ENCODE measurements at regions of chr5 and their contacts with region 1.

Region 1: DNA sequence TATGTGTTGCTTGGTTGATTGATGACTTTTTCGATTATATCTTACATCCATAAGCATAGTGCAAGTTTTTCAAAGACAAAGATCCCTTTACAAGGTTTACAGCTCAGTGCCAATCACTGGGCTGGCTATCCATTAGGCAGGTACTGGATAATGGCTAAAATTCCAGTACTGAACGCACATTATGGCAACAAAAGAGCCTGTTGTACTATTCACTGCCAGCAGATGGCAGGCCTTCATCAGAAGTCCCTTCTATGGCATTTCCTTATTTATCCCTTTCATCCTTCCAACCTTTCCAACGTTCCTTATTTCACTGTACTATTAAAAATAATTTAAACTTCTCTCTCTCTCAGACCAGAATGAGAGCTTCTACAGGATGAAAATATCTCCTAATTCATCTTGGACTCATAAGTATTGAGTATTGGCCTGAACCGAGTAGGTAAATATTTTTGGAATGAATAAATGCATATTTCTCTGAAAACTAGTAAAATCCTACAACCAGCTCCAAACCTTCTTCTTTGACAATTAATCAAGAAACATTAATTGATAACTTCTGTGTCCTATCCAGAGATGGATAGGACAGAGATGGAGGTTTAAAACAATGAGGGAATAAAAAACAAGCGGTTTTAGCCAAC is 6.7 kb upstream of the WNT8A start:
- H3K4me3 ChIP-seq: no peak overlapping the region
- H3K27ac ChIP-seq: no peak overlapping the region
- H3K4me1 ChIP-seq: no peaks in the 10 kb centered on the region
- CTCF ChIP-seq: peak; percentile 74; the same call in 1 of the 2 replicates

Region 2: DNA sequence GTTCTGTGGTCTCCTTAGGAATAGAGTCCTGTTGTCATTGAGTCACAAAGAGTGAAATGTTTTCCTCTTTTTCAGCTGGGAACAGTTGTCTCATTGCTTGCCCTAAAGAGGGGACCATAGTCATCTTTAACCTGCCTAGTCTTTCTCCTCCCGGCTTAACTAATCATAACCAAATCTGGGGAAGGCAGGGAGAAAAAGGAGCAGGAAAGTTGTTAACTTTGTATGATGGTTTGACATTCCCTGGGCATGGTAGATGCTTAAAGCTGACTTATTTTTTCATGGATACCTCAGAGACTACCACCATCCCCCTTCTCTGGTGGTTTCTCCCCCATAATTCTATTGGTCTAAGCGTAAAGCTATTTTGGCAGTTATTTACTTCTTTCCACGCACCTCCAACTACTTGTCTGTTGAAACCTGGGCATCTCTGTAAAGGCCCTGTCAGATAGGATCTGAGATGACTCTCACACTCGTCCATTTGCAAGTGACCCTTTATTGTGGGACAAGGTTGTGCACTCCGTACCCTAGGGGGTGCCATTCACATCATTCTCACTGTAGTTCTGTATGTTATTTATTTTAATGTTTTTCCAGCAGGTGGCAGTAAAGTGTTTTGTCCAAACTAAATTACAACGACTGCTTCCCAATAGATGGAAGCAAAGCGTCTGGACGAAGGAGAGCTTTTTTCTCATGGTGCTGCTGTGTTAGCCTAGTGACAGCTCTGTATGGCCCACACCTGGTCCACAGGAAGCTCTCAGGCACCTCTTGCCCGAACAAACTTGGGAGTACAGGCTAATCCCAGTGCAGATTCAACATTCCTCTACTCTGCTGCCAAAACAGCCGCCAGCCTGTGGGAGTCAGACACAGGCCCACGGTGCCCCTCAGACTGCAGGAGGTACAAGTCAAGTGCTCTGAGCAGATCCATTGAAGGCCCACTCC is 41.3 kb before region 1 on chr5:
- CTCF ChIA-PET with region 1: interaction called, 34 read pairs
- POLR2A ChIA-PET with region 1: interaction called, 5 read pairs
- H3K4me3 ChIP-seq: no peak overlapping the region
- H3K27ac ChIP-seq: no peak overlapping the region
- H3K4me1 ChIP-seq: no peaks in the 10 kb centered on the region
- CTCF ChIP-seq: peak; percentile 90

Region 3: GRCh38 chr5:138092301-138092700 is 15.1 kb after region 1 on chr5:
- CTCF ChIA-PET with region 1: interaction called, 48 read pairs
- POLR2A ChIA-PET with region 1: no interaction called
- H3K4me3 ChIP-seq: no peak overlapping the region
- H3K27ac ChIP-seq: no peak overlapping the region
- H3K4me1 ChIP-seq: no peaks in the 10 kb centered on the region
- CTCF ChIP-seq: no peak

Region 4: DNA sequence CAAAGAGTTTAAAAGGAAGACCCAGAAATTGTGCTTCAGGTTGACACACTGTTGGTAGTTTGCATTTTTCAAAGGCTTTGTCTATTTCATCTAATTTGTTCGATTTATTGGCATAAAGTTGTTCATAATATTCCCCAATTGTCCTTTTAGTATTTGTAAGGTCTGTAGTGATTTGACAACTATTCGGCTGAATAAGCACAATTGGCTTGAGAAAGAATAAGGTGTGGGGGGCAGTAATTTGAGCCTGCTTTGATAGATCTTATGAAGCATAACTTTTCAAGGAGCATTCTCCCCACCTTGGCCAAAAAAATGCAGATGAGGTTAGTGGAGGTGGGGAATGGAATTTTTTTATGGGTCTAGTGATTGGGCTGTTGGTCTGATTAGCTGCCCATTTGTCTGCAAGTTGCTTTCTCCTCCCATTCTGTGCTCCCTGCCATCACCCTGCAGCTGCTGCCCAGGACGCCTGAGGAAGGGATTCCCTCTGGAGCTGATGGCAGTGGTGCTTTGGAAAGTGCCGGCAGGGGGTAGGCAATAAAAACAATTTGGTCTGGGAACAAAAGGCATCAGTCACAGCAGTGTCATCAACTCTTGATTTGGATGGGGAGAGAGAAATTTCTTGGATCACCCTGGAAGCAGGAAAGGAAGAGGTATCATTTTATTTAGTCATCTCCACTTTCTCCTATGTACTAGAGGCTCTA is 33.2 kb after region 1 on chr5:
- CTCF ChIA-PET with region 1: interaction called, 16 read pairs
- POLR2A ChIA-PET with region 1: no interaction called
- H3K4me3 ChIP-seq: no peak overlapping the region
- H3K27ac ChIP-seq: peak overlapping the region; percentile 13; the same call in 1 of the 2 replicates
- H3K4me1 ChIP-seq: peaks cover 22% of the 10 kb centered on the region
- CTCF ChIP-seq: no peak

Region 5: DNA sequence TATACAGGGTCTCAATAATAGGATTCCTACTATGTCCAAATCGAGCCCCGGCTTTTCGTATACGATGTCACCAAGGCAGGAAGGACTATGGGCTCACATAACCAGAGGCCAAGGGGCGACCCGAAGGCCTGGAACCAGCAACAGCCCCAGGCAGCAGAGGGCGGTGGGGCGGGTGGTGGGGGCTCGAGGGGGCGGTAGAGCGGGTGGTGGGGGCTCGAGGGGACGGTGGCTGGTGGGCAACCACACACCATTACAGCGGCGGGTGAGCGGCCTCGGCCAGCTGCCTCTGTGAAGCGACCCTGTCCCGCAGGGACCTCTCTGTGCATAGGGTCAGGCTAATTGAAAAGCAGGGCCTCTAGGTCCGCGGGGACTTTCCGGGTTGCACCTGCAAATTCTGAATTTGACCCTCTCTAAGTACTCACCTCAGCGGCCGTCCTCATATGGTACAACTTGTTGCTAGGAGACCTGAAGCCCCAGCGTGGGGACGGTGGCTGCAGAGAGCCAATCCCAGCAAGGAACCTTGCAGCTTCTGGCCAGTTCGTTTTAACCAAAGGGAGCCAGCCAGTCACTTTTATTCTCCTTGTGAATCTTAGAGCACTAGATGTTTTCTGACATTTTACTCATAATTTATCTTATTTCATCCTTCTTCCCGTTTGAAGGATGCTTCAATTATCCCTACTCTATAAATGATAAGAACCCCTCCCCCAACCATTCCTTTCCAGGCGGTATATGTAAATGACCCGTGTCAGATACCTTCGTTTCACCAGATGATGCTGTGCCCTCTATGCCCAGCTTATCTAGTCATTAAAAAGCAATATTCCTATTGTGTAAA is 62.0 kb after region 1 on chr5 and contains the start of gene NME5:
- CTCF ChIA-PET with region 1: interaction called, 96 read pairs
- POLR2A ChIA-PET with region 1: no interaction called
- H3K4me3 ChIP-seq: peak within 1 kb of the TSS; percentile 46
- H3K27ac ChIP-seq: no peak within 1 kb of the TSS
- H3K4me1 ChIP-seq: no peaks in the 10 kb centered on the region
- CTCF ChIP-seq: no peak

Measured in HEK293 (cell line).